ENCODE measurements at regions of chr18 and their contacts with region 1.

Region 1: GRCh38 chr18:59837586-59837985 is 62.2 kb upstream of the PMAIP1 start:
- DNase-seq: peak; percentile 70
- H3K4me3 Mint-ChIP-seq: no peak overlapping the region
- H3K27ac Mint-ChIP-seq: no peak overlapping the region
- H3K4me1 Mint-ChIP-seq: peaks cover 5% of the 10 kb centered on the region
- H3K27me3 Mint-ChIP-seq: no peaks in the 10 kb centered on the region

Region 2: DNA sequence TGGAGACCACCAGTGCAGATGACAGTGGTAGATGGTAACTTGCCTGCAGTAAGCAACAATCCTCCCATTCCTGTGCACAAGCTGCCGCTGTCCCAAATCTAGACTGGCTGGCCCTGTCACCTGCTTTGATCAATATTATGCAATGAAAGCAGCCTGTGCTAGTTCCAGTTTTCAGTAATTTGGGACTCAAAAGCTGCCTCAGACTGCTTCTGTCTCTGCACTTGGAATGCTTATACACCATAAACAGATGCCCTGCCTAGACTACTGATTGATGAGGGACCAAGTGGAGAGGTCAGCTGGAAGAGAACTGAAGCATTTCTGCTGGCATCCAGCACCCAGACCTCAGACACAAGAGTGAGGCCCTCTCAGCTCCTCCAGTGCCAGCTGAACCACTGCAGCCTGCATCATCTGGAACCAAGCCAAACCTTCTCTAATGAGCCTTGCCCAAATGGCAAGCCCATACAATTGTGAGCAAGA is 165.3 kb before region 1 on chr18:
- CTCF ChIA-PET with region 1: no interaction called
- intact Hi-C with region 1: no loop called
- DNase-seq: no peak
- H3K4me3 Mint-ChIP-seq: no peak overlapping the region
- H3K27ac Mint-ChIP-seq: no peak overlapping the region
- H3K4me1 Mint-ChIP-seq: no peaks in the 10 kb centered on the region
- H3K27me3 Mint-ChIP-seq: peaks cover 4% of the 10 kb centered on the region

Region 3: GRCh38 chr18:59899298-59900221 is 62.0 kb after region 1 on chr18 and contains the start of gene PMAIP1:
- CTCF ChIA-PET with region 1: interaction called, 5 read pairs
- intact Hi-C with region 1: loop called (anchors 1 kb)
- DNase-seq: peak; percentile 90
- H3K4me3 Mint-ChIP-seq: peak within 1 kb of the TSS; percentile 94
- H3K27ac Mint-ChIP-seq: peak within 1 kb of the TSS; percentile 99
- H3K4me1 Mint-ChIP-seq: peaks cover 29% of the 10 kb centered on the region
- H3K27me3 Mint-ChIP-seq: no peaks in the 10 kb centered on the region
- total RNA-seq, gene PMAIP1: 132 to 141 TPM

Region 4: DNA sequence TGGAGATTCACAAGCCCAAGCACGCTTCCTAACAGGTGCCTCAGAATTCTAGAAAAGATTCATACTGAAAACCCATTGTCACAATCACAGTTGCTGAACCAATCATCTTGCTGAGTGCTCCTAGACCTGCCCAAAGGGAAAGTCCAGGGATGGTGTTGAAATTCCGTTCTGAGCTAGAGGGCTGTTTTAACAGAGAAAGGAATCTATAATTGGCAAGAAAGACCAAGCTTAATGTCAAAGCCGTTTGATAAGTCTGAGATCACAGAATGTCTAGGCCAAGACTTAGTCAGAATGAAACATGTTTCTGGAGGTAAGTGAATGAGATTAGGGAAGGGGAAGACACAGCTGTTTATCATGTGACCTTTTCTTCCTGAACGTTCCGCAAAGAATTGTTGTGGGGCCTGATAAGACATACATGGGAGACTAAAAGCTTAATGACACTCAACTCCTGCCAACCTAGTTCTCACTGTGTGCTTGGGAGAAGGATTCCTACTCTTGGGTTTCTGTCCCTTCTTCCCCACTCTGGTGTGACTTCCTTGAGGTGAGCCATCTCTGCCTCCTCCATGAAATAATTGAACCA is 89.8 kb after region 1 on chr18:
- CTCF ChIA-PET with region 1: no interaction called
- intact Hi-C with region 1: loop called (anchors 2 kb)
- DNase-seq: peak; percentile 77
- H3K4me3 Mint-ChIP-seq: no peak overlapping the region
- H3K27ac Mint-ChIP-seq: peak overlapping the region; percentile 83
- H3K4me1 Mint-ChIP-seq: peaks cover 32% of the 10 kb centered on the region
- H3K27me3 Mint-ChIP-seq: peaks cover 6% of the 10 kb centered on the region

Region 5: GRCh38 chr18:59996370-59996966 is 158.9 kb after region 1 on chr18:
- CTCF ChIA-PET with region 1: interaction called, 3 read pairs
- intact Hi-C with region 1: loop called (anchors 1 kb)
- DNase-seq: peak; percentile 56
- H3K4me3 Mint-ChIP-seq: no peak overlapping the region
- H3K27ac Mint-ChIP-seq: no peak overlapping the region
- H3K4me1 Mint-ChIP-seq: no peaks in the 10 kb centered on the region
- H3K27me3 Mint-ChIP-seq: peaks cover 21% of the 10 kb centered on the region

Region 6: DNA sequence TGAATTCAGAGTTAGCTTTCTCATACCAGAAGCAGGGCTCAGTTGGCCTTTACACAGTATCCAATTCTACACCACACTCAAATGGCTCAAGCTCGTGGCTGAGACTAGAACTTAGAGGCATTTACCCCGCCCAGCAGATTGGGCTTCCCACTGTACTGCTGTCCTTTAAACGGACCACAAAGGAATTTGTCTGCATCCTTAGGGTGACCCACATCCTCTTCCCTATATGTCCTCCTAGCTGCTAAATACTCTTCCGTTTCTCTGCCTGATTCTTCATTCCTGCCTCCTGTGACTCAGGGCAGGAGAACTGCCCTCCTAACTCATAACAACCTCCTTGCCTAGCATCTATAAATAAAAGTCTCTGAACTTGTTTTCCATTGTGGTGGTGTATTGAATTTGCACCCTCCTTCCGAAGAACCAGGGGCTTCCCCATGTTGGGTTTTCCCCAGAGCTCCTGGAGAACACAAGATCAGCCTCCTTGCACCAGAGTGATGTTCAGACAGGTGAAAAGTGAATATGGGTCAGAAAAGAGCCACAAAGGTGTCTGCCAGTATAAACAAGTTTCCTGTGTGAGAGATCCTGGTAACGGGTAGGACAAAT is 567.0 kb after region 1 on chr18:
- CTCF ChIA-PET with region 1: no interaction called
- intact Hi-C with region 1: no loop called
- DNase-seq: no peak
- H3K4me3 Mint-ChIP-seq: no peak overlapping the region
- H3K27ac Mint-ChIP-seq: no peak overlapping the region
- H3K4me1 Mint-ChIP-seq: no peaks in the 10 kb centered on the region
- H3K27me3 Mint-ChIP-seq: no peaks in the 10 kb centered on the region

Region 7: DNA sequence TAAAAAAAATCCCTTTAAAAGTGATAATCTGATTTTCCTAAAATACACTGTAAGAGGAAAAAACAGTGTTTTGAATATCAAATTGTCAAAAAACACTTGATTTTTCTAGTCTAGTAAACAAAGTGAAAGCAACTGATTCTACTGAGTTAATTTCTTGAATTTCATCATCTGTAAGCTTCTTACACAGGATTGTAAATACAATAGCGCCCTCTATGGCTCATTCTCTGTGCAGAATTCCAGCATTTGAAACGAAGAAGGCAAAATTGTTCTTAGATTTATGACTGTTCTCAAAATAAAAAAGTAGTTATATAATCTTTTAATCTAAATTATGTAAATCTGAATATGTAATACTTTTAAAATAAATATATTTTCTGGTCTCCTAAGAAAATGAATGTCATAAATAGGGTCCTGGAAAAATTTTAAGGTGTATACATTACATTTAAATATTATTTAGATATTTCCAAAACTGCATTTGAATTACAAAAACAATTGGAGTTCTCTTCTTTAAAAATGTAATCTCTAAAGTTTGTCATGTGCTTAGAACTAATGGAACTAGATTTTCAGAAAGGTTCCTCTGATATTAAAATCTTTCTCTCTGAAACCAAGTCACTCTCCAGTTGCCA is 711.9 kb after region 1 on chr18:
- CTCF ChIA-PET with region 1: no interaction called
- intact Hi-C with region 1: loop called (anchors 2 kb)
- DNase-seq: peak; percentile 20
- H3K4me3 Mint-ChIP-seq: no peak overlapping the region
- H3K27ac Mint-ChIP-seq: no peak overlapping the region
- H3K4me1 Mint-ChIP-seq: no peaks in the 10 kb centered on the region
- H3K27me3 Mint-ChIP-seq: no peaks in the 10 kb centered on the region

Measured in activated naive CD4-positive, alpha-beta T cell treated with anti-CD3 and anti-CD28 coated beads for 36 hours (primary cell).